ENCODE measurements at regions of chr3 and their contacts with region 1.

Region 1: DNA sequence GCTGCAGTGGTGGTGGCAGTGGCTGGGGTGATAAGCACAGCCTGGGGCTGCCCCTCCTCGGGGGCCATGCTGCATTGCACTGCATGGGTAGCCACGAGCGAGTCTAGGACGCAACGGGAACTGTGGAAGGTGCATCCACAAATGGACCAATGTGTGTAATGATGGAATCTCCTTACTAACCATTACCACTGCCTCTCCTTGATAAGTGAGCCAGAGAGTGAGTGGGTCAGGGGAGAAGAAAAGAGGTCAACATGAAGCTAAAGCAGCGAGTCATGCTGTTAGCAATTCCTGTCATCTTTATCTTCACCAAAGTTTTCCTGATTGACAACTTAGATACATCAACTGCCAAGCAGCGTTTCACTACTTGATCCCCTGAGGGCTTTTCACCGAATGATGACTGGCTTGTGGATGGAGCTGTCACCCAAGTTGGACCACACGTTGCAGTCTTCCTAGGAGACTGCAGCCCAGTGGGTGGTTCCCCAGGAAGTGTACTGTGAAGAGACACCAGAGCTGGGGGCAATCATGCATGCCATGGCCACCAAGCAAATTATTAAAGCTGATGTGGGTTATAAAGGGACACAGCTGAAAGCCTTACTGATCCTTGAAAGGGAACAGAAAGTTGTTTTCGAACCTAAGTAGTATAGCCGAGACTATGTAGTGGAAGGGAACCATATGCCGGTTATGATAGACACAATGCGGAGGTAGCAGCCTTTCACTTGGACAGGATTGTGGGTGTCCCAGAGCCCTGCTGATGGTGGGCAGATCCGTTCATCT is 20.6 kb downstream of the SAMD7 start:
- DNase-seq: peak; percentile 85
- ATAC-seq: peak; percentile 94
- H3K4me3 ChIP-seq: peak overlapping the region; percentile 18; the same call in 1 of the 2 replicates
- H3K27ac ChIP-seq: peak overlapping the region; percentile 79
- H3K4me1 ChIP-seq: peaks cover 33% of the 10 kb centered on the region
- H3K27me3 ChIP-seq: no peaks in the 10 kb centered on the region
- CTCF ChIP-seq: no peak
- EP300 ChIP-seq: peak in 1 of 2 experiments; percentile 67; a peak in 2 of 4 replicates
- POLR2A ChIP-seq: peak; percentile 48; the same call in 1 of the 2 replicates
- RAD21 ChIP-seq: peak; percentile 22

Region 2: GRCh38 chr3:169619793-169620192 is 312.1 kb before region 1 on chr3:
- CTCF ChIA-PET with region 1: no interaction called
- POLR2A ChIA-PET with region 1: no interaction called
- RAD21 ChIA-PET with region 1: no interaction called
- SMC1A ChIA-PET with region 1: no interaction called
- in situ Hi-C with region 1: no loop called
- intact Hi-C with region 1: no loop called
- DNase-seq: no peak
- ATAC-seq: no peak
- H3K4me3 ChIP-seq: no peak overlapping the region
- H3K27ac ChIP-seq: no peak overlapping the region
- H3K4me1 ChIP-seq: no peaks in the 10 kb centered on the region
- H3K27me3 ChIP-seq: no peaks in the 10 kb centered on the region; a peak in 1 of 4 replicates
- CTCF ChIP-seq: no peak
- EP300 ChIP-seq: no peak
- POLR2A ChIP-seq: no peak
- RAD21 ChIP-seq: no peak

Region 3: DNA sequence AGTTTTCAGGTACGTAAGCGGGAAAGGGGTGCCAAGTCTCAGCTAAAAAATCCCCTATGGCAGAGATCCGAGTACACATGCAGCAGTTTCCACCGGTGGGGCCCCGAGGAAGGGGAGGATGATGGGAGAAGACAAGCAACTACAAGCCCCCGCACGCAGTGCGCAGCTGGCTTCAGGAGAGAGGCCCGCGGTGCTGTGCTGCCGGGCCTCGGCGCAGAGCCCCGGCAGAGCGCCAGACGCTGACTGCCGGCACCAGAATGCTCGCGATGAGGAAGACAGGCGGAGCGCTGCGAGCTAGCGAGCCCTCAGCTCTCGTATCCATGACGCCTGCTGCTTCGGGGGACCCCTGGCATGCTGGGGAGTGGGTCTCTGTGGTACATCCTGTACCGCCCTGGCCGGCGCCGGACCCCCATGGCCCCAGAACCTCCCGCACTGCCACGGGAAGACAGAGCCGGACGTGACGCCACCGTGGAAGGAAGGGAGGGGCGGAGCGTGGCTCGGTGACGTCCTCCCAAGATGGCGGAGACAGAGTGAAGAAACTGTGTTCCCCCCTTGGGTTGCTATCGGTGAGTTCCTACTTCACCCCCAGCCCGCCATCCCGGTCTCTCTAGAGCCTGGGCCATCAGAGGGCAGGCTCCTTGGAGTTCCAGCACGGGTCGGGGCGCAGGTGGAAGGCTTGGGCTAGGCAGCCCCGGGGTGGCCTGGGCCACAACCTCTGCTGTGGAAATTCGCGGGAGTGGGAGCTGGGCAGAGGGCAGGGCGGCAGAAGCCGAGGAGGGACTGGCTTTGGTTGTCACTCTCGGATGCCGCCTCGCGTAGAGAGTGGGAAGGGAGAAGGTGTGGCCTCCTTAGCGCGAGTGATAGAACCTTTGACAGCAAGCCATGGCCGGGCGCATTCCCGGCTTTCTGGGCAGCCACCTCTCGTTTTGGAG is 158.8 kb before region 1 on chr3 and contains the start of gene MYNN:
- CTCF ChIA-PET with region 1: no interaction called
- POLR2A ChIA-PET with region 1: no interaction called
- RAD21 ChIA-PET with region 1: no interaction called
- SMC1A ChIA-PET with region 1: interaction called, 3 read pairs
- in situ Hi-C with region 1: no loop called
- intact Hi-C with region 1: loop called (anchors 5 kb)
- DNase-seq: peak; percentile 63
- ATAC-seq: peak; percentile 88
- H3K4me3 ChIP-seq: peak within 1 kb of the TSS; percentile 97
- H3K27ac ChIP-seq: peak within 1 kb of the TSS; percentile 99
- H3K4me1 ChIP-seq: peaks cover 14% of the 10 kb centered on the region; the same call in 1 of the 2 replicates
- H3K27me3 ChIP-seq: no peaks in the 10 kb centered on the region
- CTCF ChIP-seq: peak in 2 of 3 experiments; percentile 0 to 12; a peak in 1 of 6 replicates
- EP300 ChIP-seq: no peak
- POLR2A ChIP-seq: peak; percentile 99
- RAD21 ChIP-seq: no peak
- polyA plus RNA-seq, gene MYNN: 14.9 to 16.7 TPM

Region 4: DNA sequence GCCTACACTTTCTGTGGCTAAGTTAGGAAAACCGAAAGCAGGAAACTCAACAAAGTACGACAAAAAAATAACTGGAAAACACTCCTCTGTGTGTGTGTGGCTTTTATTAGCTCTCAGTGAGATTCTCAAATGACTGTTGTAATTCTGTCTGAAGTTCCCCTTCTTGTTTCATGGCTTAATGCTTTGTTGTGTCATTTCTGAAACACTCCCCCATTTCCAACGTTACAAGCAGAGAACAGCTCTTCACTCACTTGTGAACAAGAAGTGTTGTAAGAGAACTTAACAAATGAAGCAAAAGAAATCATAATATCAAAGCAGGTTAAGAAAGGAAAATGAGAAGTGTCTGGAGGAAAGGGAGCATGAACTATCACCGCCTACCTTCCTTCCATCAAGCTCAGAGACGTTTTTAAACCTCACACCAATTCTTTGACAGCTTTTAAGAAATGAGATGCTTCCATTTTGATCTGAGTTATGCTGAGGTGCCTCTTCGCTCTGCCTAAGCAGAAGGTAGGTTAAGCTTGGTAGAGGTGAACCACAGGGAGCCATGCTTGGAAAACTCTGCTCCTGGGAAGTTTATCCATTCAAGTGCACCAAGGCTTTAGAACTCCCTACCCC is 22.3 kb after region 1 on chr3:
- CTCF ChIA-PET with region 1: interaction called, 12 read pairs
- POLR2A ChIA-PET with region 1: interaction called, 4 read pairs
- RAD21 ChIA-PET with region 1: interaction called, 13 read pairs
- SMC1A ChIA-PET with region 1: interaction called, 45 read pairs
- in situ Hi-C with region 1: no loop called
- intact Hi-C with region 1: no loop called
- DNase-seq: peak; percentile 38
- ATAC-seq: peak; percentile 92
- H3K4me3 ChIP-seq: peak overlapping the region; percentile 37
- H3K27ac ChIP-seq: peak overlapping the region; percentile 95
- H3K4me1 ChIP-seq: peaks cover 28% of the 10 kb centered on the region
- H3K27me3 ChIP-seq: no peaks in the 10 kb centered on the region
- CTCF ChIP-seq: no peak
- EP300 ChIP-seq: peak; percentile 14 to 49; a peak in 1 of 4 replicates
- POLR2A ChIP-seq: 0 out of 2 replicates have a peak, but pooled peaks have one; percentile 30
- RAD21 ChIP-seq: peak; percentile 15; the same call in 1 of the 2 replicates

Region 5: DNA sequence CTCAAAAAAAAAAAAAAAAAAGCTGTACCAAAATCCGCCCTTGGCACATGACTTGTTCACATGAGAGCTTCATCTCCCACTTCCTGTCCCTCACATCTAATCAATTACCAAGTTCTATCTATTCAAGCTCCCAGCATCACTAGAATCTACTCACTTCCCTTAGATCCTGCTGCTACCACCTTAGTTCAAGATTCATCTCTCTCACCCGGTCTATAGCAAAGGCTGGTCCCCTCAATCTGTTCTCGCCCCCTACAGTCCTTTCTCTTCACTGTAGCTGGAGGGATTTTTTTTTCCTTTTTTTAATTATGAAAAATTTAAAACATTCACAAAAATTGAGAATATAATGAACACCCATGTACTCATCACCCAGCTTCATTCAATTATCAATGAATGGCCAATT is 89.1 kb after region 1 on chr3:
- CTCF ChIA-PET with region 1: interaction called, 21 read pairs
- POLR2A ChIA-PET with region 1: no interaction called
- RAD21 ChIA-PET with region 1: interaction called, 4 read pairs
- SMC1A ChIA-PET with region 1: interaction called, 23 read pairs
- in situ Hi-C with region 1: no loop called
- intact Hi-C with region 1: no loop called
- DNase-seq: no peak
- ATAC-seq: peak; percentile 52; the same call in 2 of the 3 replicates
- H3K4me3 ChIP-seq: no peak overlapping the region
- H3K27ac ChIP-seq: no peak overlapping the region
- H3K4me1 ChIP-seq: no peaks in the 10 kb centered on the region
- H3K27me3 ChIP-seq: no peaks in the 10 kb centered on the region
- CTCF ChIP-seq: peak in 1 of 3 experiments; percentile 19; a peak in 2 of 6 replicates
- EP300 ChIP-seq: no peak
- POLR2A ChIP-seq: no peak
- RAD21 ChIP-seq: peak; percentile 65

Measured in GM12878 (cell line).